Activated T-helper 2 cell treated with anti-CD3 and anti-CD28 coated beads, Interferon-gamma antibody, Interleukin-2, Interleukin-4, amounts not matched to agents 10 μg/mL and 5 μg/mL and 100 μg/mL, durations not matched to agents 14 hours and 24 hours and 36 hours (primary cell): ENCODE measurements at regions of chr7 and their contacts with region 1.

Region 1: DNA sequence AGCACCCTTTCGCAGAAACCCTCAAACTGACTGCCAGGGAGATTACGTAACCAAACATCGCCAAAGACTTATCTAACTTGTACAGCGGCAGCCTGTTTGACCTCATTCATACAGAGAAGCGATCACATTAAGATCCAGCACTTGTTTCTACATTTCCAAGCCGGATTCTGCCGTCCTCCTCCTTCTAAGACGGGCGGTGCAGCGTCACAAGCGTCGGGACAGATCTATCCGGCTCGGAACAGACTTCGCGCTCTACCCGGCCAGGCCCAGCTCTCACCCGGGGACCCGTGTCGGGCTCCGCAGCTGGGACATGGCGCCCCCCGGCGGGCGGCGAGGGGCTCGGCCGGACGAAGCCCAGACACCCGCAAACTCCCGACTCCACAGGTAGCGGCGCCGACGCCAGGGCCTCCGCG is 373 bp downstream of the H2AZ2 start:
- DNase-seq: peak; percentile 83
- H3K4me3 Mint-ChIP-seq: peak overlapping the region; percentile 91
- H3K27ac Mint-ChIP-seq: peak overlapping the region; percentile 96
- H3K4me1 Mint-ChIP-seq: peaks cover 44% of the 10 kb centered on the region
- H3K27me3 Mint-ChIP-seq: no peaks in the 10 kb centered on the region

Region 2: DNA sequence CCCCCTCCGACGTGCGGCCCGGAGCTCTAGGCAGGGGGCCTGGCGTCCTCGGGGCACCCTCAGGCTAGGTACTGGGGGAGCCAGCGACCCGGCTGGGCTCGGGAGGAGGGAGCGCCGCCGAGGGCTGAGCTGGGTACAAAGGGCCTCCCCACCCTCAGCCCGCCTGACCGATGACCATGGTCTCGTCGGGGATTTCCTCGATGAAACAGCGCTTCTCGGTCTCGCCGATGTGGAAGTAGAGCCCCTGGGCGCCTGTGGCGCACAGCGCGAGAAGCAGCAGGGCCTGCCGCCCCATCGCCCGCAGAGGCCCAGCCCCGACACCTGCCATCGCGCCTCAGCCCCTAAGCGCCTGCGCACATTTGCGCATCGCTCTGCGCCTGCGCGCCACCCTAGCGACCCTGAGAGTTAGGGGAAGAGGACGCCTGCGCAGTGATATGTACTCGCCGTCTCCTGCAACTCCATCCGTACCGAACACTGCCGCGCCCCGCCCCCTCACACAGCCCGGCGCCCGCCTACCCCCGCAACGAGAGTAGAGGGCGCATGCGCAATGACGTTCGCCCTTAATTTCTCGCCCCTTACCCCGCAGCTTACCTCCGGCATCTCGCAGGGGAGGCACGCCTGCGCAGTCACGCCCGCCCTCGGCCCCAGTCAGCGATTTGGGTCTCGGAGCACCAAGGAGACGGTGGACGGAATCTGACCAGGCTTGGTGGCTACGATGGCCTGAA is 265.5 kb before region 1 on chr7 and contains the start of gene TMED4:
- intact Hi-C with region 1: loop called (anchors 1 kb)
- DNase-seq: peak; percentile 100
- H3K4me3 Mint-ChIP-seq: peak within 1 kb of the TSS; percentile 88
- H3K27ac Mint-ChIP-seq: peak within 1 kb of the TSS; percentile 93
- H3K4me1 Mint-ChIP-seq: peaks cover 23% of the 10 kb centered on the region
- H3K27me3 Mint-ChIP-seq: peaks cover 2% of the 10 kb centered on the region
- total RNA-seq, gene TMED4: 70.3 and 75.1 TPM in 2 replicates

Region 3: GRCh38 chr7:44606450-44607254 is 240.9 kb before region 1 on chr7 and contains the start of gene OGDH:
- intact Hi-C with region 1: loop called (anchors 1 kb)
- DNase-seq: peak; percentile 98
- H3K4me3 Mint-ChIP-seq: peak within 1 kb of the TSS; percentile 99
- H3K27ac Mint-ChIP-seq: peak within 1 kb of the TSS; percentile 100
- H3K4me1 Mint-ChIP-seq: peaks cover 23% of the 10 kb centered on the region
- H3K27me3 Mint-ChIP-seq: peaks cover 5% of the 10 kb centered on the region
- total RNA-seq, gene OGDH: 105 and 109 TPM in 2 replicates

Region 4: GRCh38 chr7:44748045-44748947 is 99.2 kb before region 1 on chr7 and contains the start of gene ZMIZ2:
- intact Hi-C with region 1: loop called (anchors 2 kb)
- DNase-seq: peak; percentile 87
- H3K4me3 Mint-ChIP-seq: peak within 1 kb of the TSS; percentile 85
- H3K27ac Mint-ChIP-seq: peak within 1 kb of the TSS; percentile 94
- H3K4me1 Mint-ChIP-seq: peaks cover 31% of the 10 kb centered on the region
- H3K27me3 Mint-ChIP-seq: no peaks in the 10 kb centered on the region
- total RNA-seq, gene ZMIZ2: 105 TPM in 2 replicates

Region 5: GRCh38 chr7:44811086-44811485 is 36.4 kb before region 1 on chr7:
- intact Hi-C with region 1: no loop called
- DNase-seq: no peak
- H3K4me3 Mint-ChIP-seq: no peak overlapping the region
- H3K27ac Mint-ChIP-seq: no peak overlapping the region
- H3K4me1 Mint-ChIP-seq: peaks cover 4% of the 10 kb centered on the region
- H3K27me3 Mint-ChIP-seq: no peaks in the 10 kb centered on the region

Region 6: DNA sequence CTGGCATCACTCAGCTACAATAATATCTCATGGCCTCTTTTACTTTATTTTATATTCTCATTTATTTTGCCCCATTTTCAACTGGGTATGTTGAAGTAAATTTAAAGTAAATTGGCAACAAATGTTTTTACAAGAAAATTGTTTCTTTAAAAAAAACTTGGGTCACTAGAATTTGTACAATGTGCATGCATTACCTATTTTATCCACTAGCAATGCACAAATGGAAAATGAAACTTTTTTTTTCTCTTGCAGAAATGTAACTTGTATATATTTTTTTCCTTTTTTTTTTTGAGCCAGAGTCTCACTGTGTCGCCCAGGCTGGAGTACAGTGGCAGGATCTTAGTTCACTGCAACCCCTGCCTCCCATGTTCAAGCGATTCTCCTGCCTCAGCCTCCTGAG is 10.6 kb after region 1 on chr7:
- intact Hi-C with region 1: loop called (anchors 1 kb)
- DNase-seq: no peak
- H3K4me3 Mint-ChIP-seq: no peak overlapping the region
- H3K27ac Mint-ChIP-seq: no peak overlapping the region
- H3K4me1 Mint-ChIP-seq: peaks cover 13% of the 10 kb centered on the region
- H3K27me3 Mint-ChIP-seq: peaks cover 10% of the 10 kb centered on the region

Region 7: DNA sequence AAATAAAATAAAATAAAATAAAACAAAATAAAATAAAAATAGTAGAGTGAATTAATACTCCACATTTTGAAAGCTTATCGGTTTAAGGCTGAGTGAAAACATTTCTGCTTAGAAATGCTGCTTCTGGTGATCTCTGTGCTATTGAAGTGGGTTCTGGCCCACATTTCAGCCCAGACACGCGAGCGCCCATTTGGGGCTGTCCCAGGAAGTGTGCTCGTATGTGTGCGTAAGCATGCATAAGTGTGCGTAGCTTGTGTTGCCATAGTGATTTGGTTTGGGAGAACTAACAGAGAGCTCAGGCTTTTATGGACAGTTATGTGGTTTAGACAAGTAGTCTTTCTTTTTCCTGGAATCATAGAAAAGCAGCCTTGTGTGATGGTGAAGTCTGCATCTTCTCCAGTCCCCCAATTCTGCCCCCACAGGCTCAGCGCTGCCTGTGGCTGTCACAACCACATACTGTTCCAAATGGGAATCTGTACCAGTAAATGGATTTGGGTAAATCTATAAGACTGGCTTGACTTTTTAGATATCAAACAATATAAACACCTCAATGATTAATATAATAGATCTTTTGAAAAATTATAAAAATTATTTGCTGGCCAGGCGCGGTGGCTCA is 67.6 kb after region 1 on chr7:
- intact Hi-C with region 1: loop called (anchors 2 kb)
- DNase-seq: peak; percentile 78
- H3K4me3 Mint-ChIP-seq: peak overlapping the region; percentile 13
- H3K27ac Mint-ChIP-seq: peak overlapping the region; percentile 92
- H3K4me1 Mint-ChIP-seq: peaks cover 14% of the 10 kb centered on the region
- H3K27me3 Mint-ChIP-seq: no peaks in the 10 kb centered on the region

Region 8: DNA sequence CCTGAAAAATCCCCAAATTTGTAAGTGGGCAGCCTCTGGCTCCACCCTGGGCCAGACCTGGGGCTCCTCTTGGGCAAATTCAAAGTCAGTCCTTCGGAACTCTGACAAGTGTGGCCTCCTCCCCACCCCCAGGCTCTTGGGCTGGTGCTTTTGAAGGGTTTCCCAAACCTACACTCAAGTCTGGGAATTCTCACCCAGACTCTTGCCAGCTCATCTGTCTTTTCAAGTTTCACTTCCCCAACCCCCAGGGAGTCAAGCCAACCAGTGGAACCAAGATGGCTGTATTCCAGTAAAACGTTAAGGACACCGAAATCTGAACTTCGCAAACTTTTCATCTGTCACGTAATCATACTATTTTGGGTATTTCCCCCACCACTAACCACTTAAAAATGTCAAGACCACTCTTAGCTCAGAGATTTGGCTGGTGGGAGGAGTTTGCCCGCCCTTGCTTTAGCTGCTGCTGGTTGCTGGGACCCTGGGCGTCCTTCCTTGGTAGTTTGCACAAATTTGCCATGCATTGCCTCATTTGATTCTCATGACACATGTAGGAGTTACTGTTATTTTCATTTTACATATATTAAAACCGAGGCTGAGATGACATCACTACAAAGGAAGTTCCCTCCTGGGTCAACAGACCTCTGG is 133.0 kb after region 1 on chr7:
- intact Hi-C with region 1: loop called (anchors 5 kb)
- DNase-seq: peak; percentile 56
- H3K4me3 Mint-ChIP-seq: peak overlapping the region; percentile 97
- H3K27ac Mint-ChIP-seq: peak overlapping the region; percentile 98
- H3K4me1 Mint-ChIP-seq: peaks cover 63% of the 10 kb centered on the region
- H3K27me3 Mint-ChIP-seq: no peaks in the 10 kb centered on the region